ENCODE measurements at regions of chr5 and their contacts with region 1.

Region 1: DNA sequence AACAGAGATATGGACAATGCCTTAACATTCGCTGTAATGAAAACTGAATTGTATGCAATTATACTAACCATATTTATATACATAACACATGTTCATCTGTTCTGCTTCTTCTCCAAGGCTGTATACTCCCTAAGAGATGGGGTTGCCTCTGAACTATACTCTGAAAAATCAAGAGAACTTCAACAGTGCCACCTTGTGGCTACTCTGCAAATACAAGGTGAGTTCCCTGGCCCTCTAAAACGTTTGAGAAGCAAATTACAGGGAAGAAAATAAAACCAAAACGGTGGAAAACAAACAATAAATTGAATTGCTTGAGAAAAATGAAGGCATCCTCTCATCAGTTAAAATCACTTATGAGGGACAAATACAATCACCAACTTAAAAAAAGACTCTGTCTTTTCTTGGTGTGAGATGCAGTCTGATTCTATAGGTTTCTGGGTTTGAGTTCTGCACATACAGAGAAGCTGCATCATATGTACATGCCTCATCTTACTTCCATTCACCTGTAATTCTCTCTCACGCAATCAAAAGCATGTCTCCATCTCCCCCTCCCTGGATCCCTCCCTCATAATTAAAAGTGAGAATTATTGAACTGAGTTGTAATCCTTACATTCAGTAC is 98.6 kb downstream of the FBXW11 start:
- DNase-seq: peak; percentile 30
- CTCF ChIP-seq: peak; percentile 73

Region 2: GRCh38 chr5:170100066-170100943 is 1807.5 kb before region 1 on chr5:
- in situ Hi-C with region 1: no loop called
- DNase-seq: peak; percentile 69
- CTCF ChIP-seq: peak; percentile 65

Region 3: GRCh38 chr5:172044631-172045314 is 136.9 kb after region 1 on chr5:
- in situ Hi-C with region 1: loop called (anchors 10 kb)
- DNase-seq: no peak
- CTCF ChIP-seq: peak; percentile 3